ENCODE measurements at regions of chr20 and their contacts with region 1.

Region 1: GRCh38 chr20:32098786-32099185 is 10.7 kb upstream of the TM9SF4 start:
- DNase-seq: no peak
- H3K4me3 Mint-ChIP-seq: no peak overlapping the region
- H3K27ac Mint-ChIP-seq: no peak overlapping the region
- H3K4me1 Mint-ChIP-seq: no peaks in the 10 kb centered on the region
- H3K27me3 Mint-ChIP-seq: peaks cover 74% of the 10 kb centered on the region
- CTCF ChIP-seq: no peak

Region 2: DNA sequence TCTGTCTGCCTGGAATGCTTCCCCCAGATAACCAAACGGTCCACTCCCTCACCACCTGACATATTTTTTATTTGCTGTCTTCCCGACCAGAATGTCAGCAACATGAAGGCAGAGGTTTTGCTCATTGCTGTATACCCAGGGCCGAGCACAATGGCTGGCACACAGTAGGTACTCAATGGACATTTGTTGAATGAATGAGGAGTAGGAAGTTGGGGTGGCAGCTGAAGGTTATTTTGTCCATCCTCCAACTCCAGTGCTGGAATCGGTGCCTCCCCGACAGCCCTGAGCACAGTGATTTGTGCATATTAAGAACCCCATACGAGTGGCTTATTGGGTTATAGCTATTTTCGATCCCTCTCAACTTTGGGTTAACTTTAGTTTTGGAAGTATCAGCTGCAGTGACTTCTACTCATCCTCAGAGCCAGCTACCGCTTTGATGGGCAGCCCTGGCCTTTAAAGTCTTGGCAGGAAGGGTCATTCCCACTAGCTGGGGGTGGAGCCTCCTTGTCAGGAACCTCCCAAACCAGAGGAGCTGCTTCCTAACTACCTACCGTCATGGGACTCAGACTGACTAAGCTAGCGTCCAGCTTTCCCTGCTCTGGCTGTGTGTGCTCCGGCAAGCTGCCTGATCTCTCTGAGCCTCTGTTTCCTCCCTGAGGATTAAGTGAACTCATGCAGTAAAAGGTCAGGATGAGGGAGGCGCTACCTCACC is 238.6 kb before region 1 on chr20:
- CTCF ChIA-PET with region 1: interaction called, 10 read pairs
- intact Hi-C with region 1: no loop called
- DNase-seq: peak; percentile 58
- H3K4me3 Mint-ChIP-seq: peak overlapping the region; percentile 66
- H3K27ac Mint-ChIP-seq: no peak overlapping the region
- H3K4me1 Mint-ChIP-seq: peaks cover 16% of the 10 kb centered on the region
- H3K27me3 Mint-ChIP-seq: no peaks in the 10 kb centered on the region
- CTCF ChIP-seq: no peak

Region 3: DNA sequence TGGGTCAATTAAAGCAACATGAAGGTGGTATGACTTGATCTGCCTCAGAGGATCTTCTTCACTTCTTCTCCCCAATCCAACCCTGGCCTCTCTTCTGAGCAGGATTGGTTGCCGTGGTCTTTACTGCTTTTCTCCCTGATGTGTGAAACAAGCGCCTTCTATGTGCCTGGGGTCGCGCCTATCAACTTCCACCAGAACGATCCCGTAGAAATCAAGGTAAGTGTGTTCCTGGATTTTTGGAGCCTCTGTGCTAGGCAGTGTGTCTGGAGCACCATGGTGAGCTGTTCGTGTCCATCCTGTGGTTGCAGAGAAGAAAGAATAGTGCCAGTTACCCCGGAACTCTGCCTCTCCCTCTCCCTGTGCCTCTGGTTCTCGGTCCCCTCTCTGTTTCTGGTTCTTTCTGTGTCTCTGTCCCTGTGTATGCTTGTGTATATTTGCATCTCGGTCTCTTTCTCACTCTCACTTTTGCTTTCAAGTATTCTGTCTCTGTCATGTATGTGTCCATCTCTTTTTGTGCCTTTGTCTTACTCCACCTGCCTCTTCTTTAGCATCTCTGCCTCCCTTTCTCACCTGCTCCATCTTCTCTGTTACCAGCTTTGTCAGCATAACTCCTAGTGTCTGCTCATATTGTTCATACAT is 34.2 kb after region 1 on chr20:
- CTCF ChIA-PET with region 1: no interaction called
- intact Hi-C with region 1: no loop called
- DNase-seq: no peak
- H3K4me3 Mint-ChIP-seq: no peak overlapping the region
- H3K27ac Mint-ChIP-seq: no peak overlapping the region
- H3K4me1 Mint-ChIP-seq: no peaks in the 10 kb centered on the region
- H3K27me3 Mint-ChIP-seq: no peaks in the 10 kb centered on the region
- CTCF ChIP-seq: no peak

Measured in Calu3 (cell line).